MCF 10A (cell line): ENCODE measurements at regions of chr1 and their contacts with region 1.

Region 1: GRCh38 chr1:39973503-39974135 is 18.7 kb downstream of the MFSD2A start:
- DNase-seq: peak; percentile 80
- H3K4me3 Mint-ChIP-seq: no peak overlapping the region
- H3K27ac Mint-ChIP-seq: no peak overlapping the region
- H3K4me1 Mint-ChIP-seq: peaks cover 38% of the 10 kb centered on the region
- H3K27me3 Mint-ChIP-seq: no peaks in the 10 kb centered on the region
- CTCF ChIP-seq: peak; percentile 94

Region 2: GRCh38 chr1:39816415-39817090 is 157.1 kb before region 1 on chr1:
- CTCF ChIA-PET with region 1: interaction called, 7 read pairs
- POLR2A ChIA-PET with region 1: no interaction called
- intact Hi-C with region 1: loop called (anchors 1 kb)
- DNase-seq: peak; percentile 72
- H3K4me3 Mint-ChIP-seq: no peak overlapping the region
- H3K27ac Mint-ChIP-seq: no peak overlapping the region
- H3K4me1 Mint-ChIP-seq: peaks cover 9% of the 10 kb centered on the region
- H3K27me3 Mint-ChIP-seq: no peaks in the 10 kb centered on the region
- CTCF ChIP-seq: peak; percentile 58

Region 3: GRCh38 chr1:39919545-39919944 is 54.1 kb before region 1 on chr1:
- CTCF ChIA-PET with region 1: interaction called, 373 read pairs
- POLR2A ChIA-PET with region 1: interaction called, 15 read pairs
- intact Hi-C with region 1: loop called (anchors 1 kb)
- DNase-seq: peak; percentile 90
- H3K4me3 Mint-ChIP-seq: no peak overlapping the region
- H3K27ac Mint-ChIP-seq: no peak overlapping the region
- H3K4me1 Mint-ChIP-seq: peaks cover 5% of the 10 kb centered on the region
- H3K27me3 Mint-ChIP-seq: no peaks in the 10 kb centered on the region
- CTCF ChIP-seq: peak; percentile 78

Region 4: DNA sequence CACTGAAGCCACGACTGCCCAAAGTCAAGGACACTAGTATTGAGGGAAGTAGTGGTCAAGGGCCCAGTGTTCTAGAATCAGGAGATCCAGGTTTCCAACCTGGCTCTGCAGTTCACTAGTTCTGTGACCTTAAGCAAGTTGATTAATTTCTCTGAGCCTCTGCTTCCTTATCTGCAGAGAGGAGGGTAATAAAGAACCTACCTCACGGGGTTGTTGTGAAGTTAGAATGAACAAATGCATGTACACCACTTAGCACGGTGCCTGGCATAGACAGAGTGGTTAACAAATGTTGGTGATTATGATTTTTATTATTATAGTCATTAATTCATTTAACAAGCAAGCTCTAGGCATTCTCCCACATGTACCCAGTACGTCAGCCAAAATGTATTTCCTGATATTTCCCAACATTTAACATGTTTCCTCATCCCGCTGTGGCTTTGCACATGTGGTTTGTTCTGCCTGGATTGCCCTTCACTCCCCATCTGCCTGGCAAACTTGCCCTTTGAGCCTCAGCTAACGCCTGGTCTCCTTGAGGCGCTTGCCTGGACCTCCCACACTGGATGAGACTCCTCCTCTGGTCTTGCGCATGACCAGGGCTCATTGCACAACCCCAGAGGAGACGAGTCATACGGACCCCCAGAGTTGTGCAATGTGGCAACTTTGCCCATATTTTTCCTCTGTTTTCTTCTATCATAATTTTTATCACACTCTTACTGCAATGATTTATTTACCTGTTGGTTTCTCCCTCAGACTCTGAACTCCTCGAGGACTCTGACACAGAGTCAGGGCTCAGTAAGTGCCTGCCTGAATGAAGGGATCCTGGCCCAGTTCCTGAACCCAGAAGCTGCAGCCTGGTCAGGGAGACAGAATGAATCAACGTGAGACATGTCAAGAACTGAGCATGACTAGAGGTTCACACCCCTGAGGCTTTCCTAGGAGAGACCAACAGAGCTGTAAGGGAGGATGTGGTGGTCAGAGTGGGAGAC is 39.4 kb before region 1 on chr1:
- CTCF ChIA-PET with region 1: interaction called, 55 read pairs
- POLR2A ChIA-PET with region 1: interaction called, 41 read pairs
- intact Hi-C with region 1: no loop called
- DNase-seq: peak; percentile 100
- H3K4me3 Mint-ChIP-seq: peak overlapping the region; percentile 15
- H3K27ac Mint-ChIP-seq: peak overlapping the region; percentile 71
- H3K4me1 Mint-ChIP-seq: peaks cover 32% of the 10 kb centered on the region
- H3K27me3 Mint-ChIP-seq: no peaks in the 10 kb centered on the region
- CTCF ChIP-seq: no peak

Region 5: DNA sequence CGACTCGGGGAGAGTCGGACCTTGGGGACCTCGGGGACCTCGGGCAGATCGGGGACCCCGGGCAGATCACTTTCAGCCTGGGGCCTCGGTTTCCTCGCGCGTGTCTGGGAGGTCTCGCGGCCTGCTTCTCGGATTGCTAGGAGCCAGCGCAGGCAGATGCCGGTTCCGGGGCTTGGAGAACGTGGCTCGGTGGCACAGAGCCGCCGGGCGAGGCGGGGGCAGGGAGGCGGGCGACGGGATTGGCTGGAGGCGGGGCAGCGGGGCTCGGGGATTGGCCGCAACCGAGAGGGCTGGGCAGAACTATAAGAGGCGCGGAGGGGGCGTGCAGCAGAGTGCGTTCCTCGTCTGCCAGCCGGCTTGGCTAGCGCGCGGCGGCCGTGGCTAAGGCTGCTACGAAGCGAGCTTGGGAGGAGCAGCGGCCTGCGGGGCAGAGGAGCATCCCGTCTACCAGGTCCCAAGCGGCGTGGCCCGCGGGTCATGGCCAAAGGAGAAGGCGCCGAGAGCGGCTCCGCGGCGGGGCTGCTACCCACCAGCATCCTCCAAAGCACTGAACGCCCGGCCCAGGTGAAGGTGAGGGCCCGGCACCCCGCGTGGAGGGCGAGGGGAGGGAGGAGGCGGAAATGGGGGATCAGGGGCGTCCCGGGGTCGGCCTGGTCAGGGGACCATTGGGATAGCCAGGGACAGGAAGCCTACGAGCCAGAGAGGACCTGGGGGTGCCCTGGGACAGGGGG is 18.6 kb before region 1 on chr1 and contains the start of gene MFSD2A:
- CTCF ChIA-PET with region 1: interaction called, 18 read pairs
- POLR2A ChIA-PET with region 1: interaction called, 89 read pairs
- intact Hi-C with region 1: no loop called
- DNase-seq: peak; percentile 95
- H3K4me3 Mint-ChIP-seq: peak within 1 kb of the TSS; percentile 82
- H3K27ac Mint-ChIP-seq: peak within 1 kb of the TSS; percentile 88
- H3K4me1 Mint-ChIP-seq: peaks cover 22% of the 10 kb centered on the region
- H3K27me3 Mint-ChIP-seq: no peaks in the 10 kb centered on the region
- CTCF ChIP-seq: no peak
- total RNA-seq, gene MFSD2A: 49.1 and 52.9 TPM in 2 replicates

Region 6: DNA sequence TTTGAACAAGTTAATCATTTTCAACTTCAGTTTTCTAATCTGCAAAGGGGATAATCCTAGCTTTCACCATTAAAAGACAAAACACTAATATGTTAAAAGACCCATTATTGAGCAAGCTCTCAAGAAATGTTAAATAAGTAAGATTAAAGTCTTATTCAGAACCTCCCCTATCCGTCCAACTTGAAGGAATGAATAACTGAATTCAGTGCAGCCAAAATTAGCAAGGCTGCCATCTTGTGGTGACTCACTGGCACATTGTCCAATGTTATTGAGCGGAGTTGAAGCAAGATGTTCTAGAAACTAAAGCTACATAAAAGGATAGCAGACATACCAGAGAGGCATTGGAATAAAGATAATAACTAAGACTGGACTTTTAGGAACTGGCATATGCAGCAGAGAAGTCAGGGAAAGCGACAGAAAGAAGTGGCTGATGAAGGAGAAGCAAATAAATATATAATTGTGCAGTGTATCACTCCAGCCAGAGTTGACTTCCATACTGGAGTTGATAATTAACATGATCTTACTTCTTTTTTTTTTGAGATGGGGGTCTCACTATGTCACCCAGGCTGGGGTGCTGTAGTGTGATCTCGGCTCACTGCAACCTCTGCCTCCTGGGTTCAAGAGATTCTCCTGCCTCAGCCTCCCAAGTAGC is 58.7 kb after region 1 on chr1:
- CTCF ChIA-PET with region 1: interaction called, 80 read pairs
- POLR2A ChIA-PET with region 1: interaction called, 6 read pairs
- intact Hi-C with region 1: loop called (anchors 1 kb)
- DNase-seq: peak; percentile 69
- H3K4me3 Mint-ChIP-seq: no peak overlapping the region
- H3K27ac Mint-ChIP-seq: no peak overlapping the region
- H3K4me1 Mint-ChIP-seq: peaks cover 35% of the 10 kb centered on the region
- H3K27me3 Mint-ChIP-seq: no peaks in the 10 kb centered on the region
- CTCF ChIP-seq: peak; percentile 59

Region 7: GRCh38 chr1:40059338-40059959 is 85.8 kb after region 1 on chr1:
- CTCF ChIA-PET with region 1: no interaction called
- POLR2A ChIA-PET with region 1: no interaction called
- intact Hi-C with region 1: no loop called
- DNase-seq: peak; percentile 50
- H3K4me3 Mint-ChIP-seq: no peak overlapping the region
- H3K27ac Mint-ChIP-seq: peak overlapping the region; percentile 27
- H3K4me1 Mint-ChIP-seq: peaks cover 30% of the 10 kb centered on the region
- H3K27me3 Mint-ChIP-seq: no peaks in the 10 kb centered on the region
- CTCF ChIP-seq: no peak